ENCODE measurements at regions of chr17 and their contacts with region 1.

Region 1: DNA sequence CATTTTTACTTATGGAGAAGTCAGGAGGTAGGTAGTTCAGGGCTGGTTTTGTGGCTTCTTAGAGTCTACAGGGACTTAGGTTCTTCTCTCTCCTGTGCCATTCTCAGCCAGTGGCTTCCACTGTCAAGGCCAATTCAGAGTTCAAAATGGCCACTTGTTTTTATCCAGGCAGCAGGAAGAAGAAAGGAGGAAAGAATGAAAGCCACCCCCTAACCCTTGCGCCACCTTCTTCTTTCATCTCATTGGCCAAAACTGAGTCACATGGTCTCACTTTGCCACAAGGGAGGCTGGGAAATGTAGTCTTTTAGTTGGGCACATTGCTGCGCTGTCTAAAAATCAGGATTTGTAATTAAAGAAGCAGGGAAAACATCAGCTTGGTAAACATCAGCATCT is 60.8 kb upstream of the MED9 start:
- DNase-seq: peak; percentile 81
- ATAC-seq: peak; percentile 39
- H3K4me3 ChIP-seq: no peak overlapping the region
- H3K27ac ChIP-seq: peak overlapping the region; percentile 96
- H3K4me1 ChIP-seq: peaks cover 52% of the 10 kb centered on the region
- H3K27me3 ChIP-seq: no peaks in the 10 kb centered on the region
- CTCF ChIP-seq: no peak

Region 2: GRCh38 chr17:17445925-17446665 is 30.1 kb after region 1 on chr17:
- CTCF ChIA-PET with region 1: no interaction called
- POLR2A ChIA-PET with region 1: no interaction called
- intact Hi-C with region 1: loop called (anchors 1 kb)
- DNase-seq: peak; percentile 99
- ATAC-seq: peak; percentile 84
- H3K4me3 ChIP-seq: peak overlapping the region; percentile 10; the same call in 1 of the 2 replicates
- H3K27ac ChIP-seq: peak overlapping the region; percentile 91
- H3K4me1 ChIP-seq: peaks cover 41% of the 10 kb centered on the region
- H3K27me3 ChIP-seq: no peaks in the 10 kb centered on the region
- CTCF ChIP-seq: peak; percentile 48; the same call in 1 of the 2 replicates